ENCODE measurements at regions of chr11 and their contacts with region 1.

Region 1: DNA sequence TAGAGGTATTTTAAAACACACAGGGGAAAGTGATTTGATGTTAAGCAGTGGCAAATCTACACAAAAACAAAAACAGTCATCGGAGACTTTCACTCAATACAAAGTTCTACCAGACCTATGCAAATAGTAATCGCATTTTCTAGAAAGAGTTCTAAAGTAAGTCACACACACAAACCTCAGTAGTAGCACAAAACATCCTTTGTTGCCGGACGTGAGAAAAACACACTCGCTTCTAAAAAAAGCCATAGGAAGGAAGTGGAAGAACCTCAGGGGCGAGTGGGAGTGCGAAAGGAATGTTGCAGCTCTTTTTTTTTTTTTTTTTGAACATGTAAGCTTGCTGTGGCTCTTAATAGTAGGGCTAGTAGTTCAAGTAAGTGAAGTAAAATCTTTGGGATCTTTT is 88.9 kb downstream of the MAML2 start:
- DNase-seq: peak; percentile 28 to 50 (median 47)
- H3K4me3 ChIP-seq: peak overlapping the region in 1 of 2 donors; percentile 36
- H3K4me3 Mint-ChIP-seq: peak overlapping the region; percentile 69 to 92 (median 84)
- H3K27ac ChIP-seq: peak overlapping the region; percentile 8
- H3K27ac Mint-ChIP-seq: peak overlapping the region; percentile 73 to 97 (median 91)
- H3K4me1 ChIP-seq: peaks cover 75% of the 10 kb centered on the region
- H3K4me1 Mint-ChIP-seq: peaks cover 68 to 94% (median 83%) of the 10 kb centered on the region in 4 donors
- H3K27me3 ChIP-seq: no peaks in the 10 kb centered on the region
- H3K27me3 Mint-ChIP-seq: no peaks in the 10 kb centered on the region

Region 2: DNA sequence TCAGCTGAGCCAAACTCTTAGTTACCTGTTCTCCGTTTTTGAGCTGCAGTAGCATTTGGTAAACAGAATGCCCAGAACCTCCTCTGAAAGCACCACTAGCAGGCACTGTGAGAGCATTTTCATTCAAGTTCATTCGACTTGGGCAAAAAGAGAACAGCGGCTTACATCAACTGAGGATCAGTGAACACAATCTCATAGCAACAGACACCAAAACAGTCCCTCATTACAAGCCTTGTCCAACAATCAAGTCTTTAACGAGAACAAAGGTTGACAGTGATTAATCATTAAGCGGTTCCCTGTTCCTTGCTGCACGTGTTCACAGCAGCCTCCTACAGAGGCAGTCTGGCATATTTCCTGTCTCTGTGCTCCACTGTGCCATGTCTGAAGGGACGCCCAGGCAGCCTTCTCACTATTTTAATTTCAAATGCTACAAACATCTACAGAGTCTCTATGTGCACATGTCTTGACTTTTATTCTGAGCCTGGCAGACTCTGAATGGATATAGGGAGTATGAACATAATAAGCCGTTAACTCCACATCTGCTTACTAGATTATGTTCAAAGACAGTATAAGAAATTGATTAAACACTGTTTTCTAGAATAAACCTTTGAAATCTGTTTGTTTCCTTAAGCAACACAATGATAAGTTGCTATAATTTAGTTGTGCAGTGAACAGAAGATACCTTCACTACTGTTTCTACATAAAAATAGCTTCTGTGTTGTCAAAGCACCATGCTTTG is 241.8 kb before region 1 on chr11:
- CTCF ChIA-PET with region 1: no interaction called
- POLR2A ChIA-PET with region 1: interaction called, 3 read pairs
- intact Hi-C with region 1: loop called (anchors 2 kb)
- DNase-seq: peak; percentile 64 to 89 (median 75)
- H3K4me3 ChIP-seq: no peak overlapping the region
- H3K4me3 Mint-ChIP-seq: peak overlapping the region in 7 of 8 donors; percentile 22 to 83 (median 63)
- H3K27ac ChIP-seq: peak overlapping the region; percentile 44
- H3K27ac Mint-ChIP-seq: peak overlapping the region; percentile 64 to 97 (median 93)
- H3K4me1 ChIP-seq: peaks cover 59% of the 10 kb centered on the region
- H3K4me1 Mint-ChIP-seq: peaks cover 9 to 64% (median 52%) of the 10 kb centered on the region in 4 donors
- H3K27me3 ChIP-seq: no peaks in the 10 kb centered on the region
- H3K27me3 Mint-ChIP-seq: no peaks in the 10 kb centered on the region

Region 3: DNA sequence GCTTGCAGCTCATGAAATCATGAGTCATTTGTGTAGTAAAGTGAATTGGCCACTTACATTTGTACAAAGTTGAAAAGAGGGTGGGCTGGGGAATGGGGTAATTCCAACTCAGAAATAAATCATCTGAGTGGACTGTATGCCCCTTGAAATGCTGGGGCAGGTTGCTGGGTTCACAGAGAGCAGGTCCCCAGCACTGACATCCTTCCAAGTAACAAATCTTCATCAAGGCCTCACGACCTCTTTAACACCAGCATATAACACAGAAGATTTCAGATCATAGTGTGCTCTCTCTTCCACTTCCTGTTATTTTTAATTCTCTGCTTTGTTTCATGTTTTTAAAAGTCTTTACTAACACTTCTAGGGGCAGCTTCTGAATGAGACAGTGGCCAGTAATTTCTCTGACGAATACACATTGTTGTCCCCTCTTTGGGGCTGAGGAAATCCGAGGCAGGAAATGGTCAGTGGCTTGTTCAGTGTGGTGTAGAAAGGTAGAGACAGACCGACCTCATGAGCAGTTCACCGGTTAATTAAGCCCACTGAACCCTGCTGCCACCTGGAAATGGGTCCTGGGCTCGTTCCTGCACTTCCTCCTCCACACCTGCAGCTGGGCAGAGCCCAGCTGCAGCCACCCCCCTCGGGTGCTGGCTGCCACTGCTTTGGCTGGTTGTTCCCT is 38.8 kb before region 1 on chr11:
- CTCF ChIA-PET with region 1: no interaction called
- POLR2A ChIA-PET with region 1: interaction called, 36 read pairs
- intact Hi-C with region 1: loop called (anchors 1 kb)
- DNase-seq: peak; percentile 41 to 47 (median 45)
- H3K4me3 ChIP-seq: peak overlapping the region in 1 of 2 donors; percentile 14
- H3K4me3 Mint-ChIP-seq: peak overlapping the region; percentile 37 to 82 (median 71)
- H3K27ac ChIP-seq: peak overlapping the region; percentile 62
- H3K27ac Mint-ChIP-seq: peak overlapping the region; percentile 89 to 96 (median 94)
- H3K4me1 ChIP-seq: peaks cover 99% of the 10 kb centered on the region
- H3K4me1 Mint-ChIP-seq: peaks cover 62 to 89% (median 77%) of the 10 kb centered on the region in 4 donors
- H3K27me3 ChIP-seq: no peaks in the 10 kb centered on the region
- H3K27me3 Mint-ChIP-seq: no peaks in the 10 kb centered on the region

Region 4: GRCh38 chr11:96267496-96268032 is 13.5 kb after region 1 on chr11:
- CTCF ChIA-PET with region 1: interaction called, 11 read pairs
- POLR2A ChIA-PET with region 1: interaction called, 27 read pairs
- intact Hi-C with region 1: loop called (anchors 1 kb)
- DNase-seq: peak; percentile 35 to 71 (median 46)
- H3K4me3 ChIP-seq: peak overlapping the region; percentile 14 to 28
- H3K4me3 Mint-ChIP-seq: peak overlapping the region; percentile 70 to 90 (median 82)
- H3K27ac ChIP-seq: peak overlapping the region; percentile 68
- H3K27ac Mint-ChIP-seq: peak overlapping the region; percentile 88 to 96 (median 93)
- H3K4me1 ChIP-seq: peaks cover 57% of the 10 kb centered on the region
- H3K4me1 Mint-ChIP-seq: peaks cover 61 to 92% (median 77%) of the 10 kb centered on the region in 4 donors
- H3K27me3 ChIP-seq: no peaks in the 10 kb centered on the region
- H3K27me3 Mint-ChIP-seq: no peaks in the 10 kb centered on the region

Region 5: GRCh38 chr11:96279018-96279895 is 25.2 kb after region 1 on chr11:
- CTCF ChIA-PET with region 1: no interaction called
- POLR2A ChIA-PET with region 1: interaction called, 11 read pairs
- intact Hi-C with region 1: no loop called
- DNase-seq: no peak
- H3K4me3 ChIP-seq: no peak overlapping the region
- H3K4me3 Mint-ChIP-seq: peak overlapping the region in 3 of 8 donors; percentile 17 to 29 (median 23)
- H3K27ac ChIP-seq: no peak overlapping the region
- H3K27ac Mint-ChIP-seq: peak overlapping the region; percentile 4 to 71 (median 41)
- H3K4me1 ChIP-seq: peaks cover 57% of the 10 kb centered on the region
- H3K4me1 Mint-ChIP-seq: peaks cover 38 to 65% (median 57%) of the 10 kb centered on the region in 4 donors
- H3K27me3 ChIP-seq: no peaks in the 10 kb centered on the region
- H3K27me3 Mint-ChIP-seq: no peaks in the 10 kb centered on the region

Region 6: GRCh38 chr11:96376796-96377195 is 122.7 kb after region 1 on chr11:
- CTCF ChIA-PET with region 1: no interaction called
- POLR2A ChIA-PET with region 1: no interaction called
- intact Hi-C with region 1: no loop called
- DNase-seq: no peak
- H3K4me3 ChIP-seq: no peak overlapping the region
- H3K4me3 Mint-ChIP-seq: no peak overlapping the region
- H3K27ac ChIP-seq: no peak overlapping the region
- H3K27ac Mint-ChIP-seq: no peak overlapping the region
- H3K4me1 ChIP-seq: no peaks in the 10 kb centered on the region
- H3K4me1 Mint-ChIP-seq: peaks cover 0 to 8% (median 4%) of the 10 kb centered on the region in 4 donors
- H3K27me3 ChIP-seq: no peaks in the 10 kb centered on the region
- H3K27me3 Mint-ChIP-seq: no peaks in the 10 kb centered on the region